ENCODE measurements at regions of chr13 and their contacts with region 1.

Region 1: DNA sequence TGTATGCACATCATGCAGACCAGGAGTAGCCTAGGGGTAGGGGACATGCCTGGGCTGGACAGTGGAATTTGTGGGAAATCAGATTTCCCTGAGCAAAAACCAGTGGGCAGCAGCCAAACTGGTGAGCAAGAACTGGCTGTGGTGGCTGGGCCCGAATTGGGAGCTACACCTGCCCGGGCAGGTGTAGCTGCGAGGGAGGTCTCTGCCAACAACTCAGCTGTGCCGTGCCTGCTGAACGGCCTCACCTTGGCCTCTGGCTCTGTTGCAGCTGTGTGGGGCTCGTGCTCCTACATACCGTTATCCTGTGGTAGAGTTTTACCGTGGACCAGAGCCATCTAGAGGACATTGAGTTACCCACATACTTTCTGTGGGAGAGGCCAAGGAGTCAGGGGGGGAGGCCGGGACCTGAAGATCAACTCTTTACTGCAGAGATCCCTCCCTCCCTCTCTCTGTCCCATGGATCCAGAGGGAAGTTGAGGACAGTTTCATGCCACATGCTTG is 113.2 kb downstream of the TM9SF2 start:
- DNase-seq: peak; percentile 47 to 49
- H3K4me3 ChIP-seq: no peak overlapping the region
- H3K4me3 Mint-ChIP-seq: no peak overlapping the region
- H3K27ac Mint-ChIP-seq: no peak overlapping the region
- H3K4me1 ChIP-seq: peaks cover 3% of the 10 kb centered on the region; the same call in 1 of the 2 replicates
- H3K4me1 Mint-ChIP-seq: no peaks in the 10 kb centered on the region
- H3K27me3 ChIP-seq: no peaks in the 10 kb centered on the region
- H3K27me3 Mint-ChIP-seq: no peaks in the 10 kb centered on the region
- CTCF ChIP-seq: peak in 1 of 2 experiments; percentile 70

Region 2: GRCh38 chr13:99442273-99442895 is 172.1 kb before region 1 on chr13:
- CTCF ChIA-PET with region 1: no interaction called
- POLR2A ChIA-PET with region 1: no interaction called
- intact Hi-C with region 1: loop called (anchors 1 kb)
- DNase-seq: peak in 1 of 2 experiments; percentile 69
- H3K4me3 ChIP-seq: no peak overlapping the region
- H3K4me3 Mint-ChIP-seq: no peak overlapping the region
- H3K27ac Mint-ChIP-seq: no peak overlapping the region
- H3K4me1 ChIP-seq: no peaks in the 10 kb centered on the region
- H3K4me1 Mint-ChIP-seq: no peaks in the 10 kb centered on the region
- H3K27me3 ChIP-seq: no peaks in the 10 kb centered on the region
- H3K27me3 Mint-ChIP-seq: peaks cover 5% of the 10 kb centered on the region
- CTCF ChIP-seq: peak; percentile 92 to 95

Region 3: DNA sequence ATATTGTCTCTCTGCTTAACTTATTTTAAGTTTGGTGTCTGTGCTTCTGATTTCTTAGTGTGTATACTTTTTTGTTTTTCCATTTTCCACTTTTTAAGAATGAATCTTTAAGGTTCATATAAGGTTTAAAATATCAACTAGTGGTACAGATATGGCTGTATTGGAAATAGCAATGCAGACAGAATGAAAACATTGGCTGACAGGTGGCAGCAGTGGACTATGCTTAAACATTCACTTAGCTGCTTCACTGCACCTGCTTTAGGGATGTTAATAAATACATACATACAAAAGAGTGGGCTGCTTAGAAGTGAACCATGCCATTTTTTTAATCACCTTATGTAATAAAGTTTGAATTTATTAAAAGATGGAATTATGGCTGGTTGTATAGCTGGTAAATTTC is 85.9 kb before region 1 on chr13:
- CTCF ChIA-PET with region 1: no interaction called
- POLR2A ChIA-PET with region 1: no interaction called
- intact Hi-C with region 1: loop called (anchors 1 kb)
- DNase-seq: peak in 1 of 2 experiments; percentile 46
- H3K4me3 ChIP-seq: no peak overlapping the region
- H3K4me3 Mint-ChIP-seq: no peak overlapping the region
- H3K27ac Mint-ChIP-seq: no peak overlapping the region
- H3K4me1 ChIP-seq: no peaks in the 10 kb centered on the region
- H3K4me1 Mint-ChIP-seq: no peaks in the 10 kb centered on the region
- H3K27me3 ChIP-seq: no peaks in the 10 kb centered on the region
- H3K27me3 Mint-ChIP-seq: no peaks in the 10 kb centered on the region
- CTCF ChIP-seq: peak; percentile 45 to 53

Region 4: GRCh38 chr13:99577934-99578917 is 36.2 kb before region 1 on chr13:
- CTCF ChIA-PET with region 1: interaction called, 12 read pairs
- POLR2A ChIA-PET with region 1: no interaction called
- intact Hi-C with region 1: loop called (anchors 1 kb)
- DNase-seq: no peak
- H3K4me3 ChIP-seq: no peak overlapping the region
- H3K4me3 Mint-ChIP-seq: no peak overlapping the region
- H3K27ac Mint-ChIP-seq: no peak overlapping the region
- H3K4me1 ChIP-seq: no peaks in the 10 kb centered on the region
- H3K4me1 Mint-ChIP-seq: no peaks in the 10 kb centered on the region
- H3K27me3 ChIP-seq: no peaks in the 10 kb centered on the region
- H3K27me3 Mint-ChIP-seq: no peaks in the 10 kb centered on the region
- CTCF ChIP-seq: peak in 1 of 2 experiments; percentile 30

Region 5: GRCh38 chr13:99830931-99831330 is 216.5 kb after region 1 on chr13:
- CTCF ChIA-PET with region 1: no interaction called
- POLR2A ChIA-PET with region 1: no interaction called
- intact Hi-C with region 1: no loop called
- DNase-seq: no peak
- H3K4me3 ChIP-seq: no peak overlapping the region
- H3K4me3 Mint-ChIP-seq: no peak overlapping the region
- H3K27ac Mint-ChIP-seq: no peak overlapping the region
- H3K4me1 ChIP-seq: no peaks in the 10 kb centered on the region
- H3K4me1 Mint-ChIP-seq: no peaks in the 10 kb centered on the region
- H3K27me3 ChIP-seq: no peaks in the 10 kb centered on the region
- H3K27me3 Mint-ChIP-seq: peaks cover 3% of the 10 kb centered on the region
- CTCF ChIP-seq: no peak

Measured in Caco-2 (cell line).